Naive thymus-derived CD4-positive, alpha-beta T cell (primary cell): ENCODE measurements at regions of chr1 and their contacts with region 1.

Region 1: DNA sequence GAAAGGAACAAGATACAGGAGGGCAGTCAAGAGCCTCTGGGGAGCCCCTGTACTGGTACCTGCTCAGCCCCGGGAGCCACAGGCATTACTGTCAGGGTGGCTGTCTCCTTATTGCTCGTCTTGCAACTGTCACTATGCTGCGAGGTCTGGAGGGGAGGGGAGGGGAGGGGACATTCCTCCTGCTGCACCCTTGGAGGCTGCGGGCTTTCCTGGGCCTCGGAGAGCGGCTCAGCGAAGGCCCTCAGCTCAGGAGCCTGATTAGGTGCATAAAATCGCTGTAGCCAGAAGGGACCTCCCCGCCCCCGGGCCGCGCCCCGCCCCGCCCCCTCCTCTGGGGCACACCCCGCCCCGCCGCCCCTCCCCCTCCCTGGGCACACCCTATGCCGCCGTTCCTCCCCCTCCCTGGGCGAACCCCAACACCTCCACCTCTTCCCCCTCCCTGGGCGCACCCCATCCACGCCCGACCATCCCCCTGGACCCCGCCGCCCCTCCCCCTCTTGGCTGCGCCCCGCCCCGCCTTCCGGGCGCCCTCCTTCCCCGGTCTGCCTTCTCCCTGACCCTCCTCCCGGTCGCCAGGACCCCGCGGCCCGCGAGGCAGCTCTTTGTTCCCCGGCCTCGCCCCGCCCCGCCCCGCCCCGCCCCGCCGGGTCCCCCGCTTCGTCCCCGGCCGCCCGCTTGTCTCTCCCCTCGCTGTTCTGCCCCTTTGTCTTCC is 35.5 kb downstream of the CACHD1 start:
- DNase-seq: peak; percentile 18 to 65 (median 44)
- ATAC-seq: peak; percentile 83
- H3K4me3 ChIP-seq: peak overlapping the region; percentile 43
- H3K4me3 Mint-ChIP-seq: peak overlapping the region; percentile 69 to 93 (median 90)
- H3K27ac ChIP-seq: peak overlapping the region; percentile 62
- H3K27ac Mint-ChIP-seq: peak overlapping the region in 8 of 9 donors; percentile 57 to 92 (median 85)
- H3K4me1 ChIP-seq: peaks cover 0 to 7% of the 10 kb centered on the region in 2 donors
- H3K4me1 Mint-ChIP-seq: peaks cover 4 to 88% (median 42%) of the 10 kb centered on the region in 7 donors
- H3K27me3 ChIP-seq: no peaks in the 10 kb centered on the region
- H3K27me3 Mint-ChIP-seq: peaks cover 0 to 32% (median 3%) of the 10 kb centered on the region in 5 donors

Region 2: DNA sequence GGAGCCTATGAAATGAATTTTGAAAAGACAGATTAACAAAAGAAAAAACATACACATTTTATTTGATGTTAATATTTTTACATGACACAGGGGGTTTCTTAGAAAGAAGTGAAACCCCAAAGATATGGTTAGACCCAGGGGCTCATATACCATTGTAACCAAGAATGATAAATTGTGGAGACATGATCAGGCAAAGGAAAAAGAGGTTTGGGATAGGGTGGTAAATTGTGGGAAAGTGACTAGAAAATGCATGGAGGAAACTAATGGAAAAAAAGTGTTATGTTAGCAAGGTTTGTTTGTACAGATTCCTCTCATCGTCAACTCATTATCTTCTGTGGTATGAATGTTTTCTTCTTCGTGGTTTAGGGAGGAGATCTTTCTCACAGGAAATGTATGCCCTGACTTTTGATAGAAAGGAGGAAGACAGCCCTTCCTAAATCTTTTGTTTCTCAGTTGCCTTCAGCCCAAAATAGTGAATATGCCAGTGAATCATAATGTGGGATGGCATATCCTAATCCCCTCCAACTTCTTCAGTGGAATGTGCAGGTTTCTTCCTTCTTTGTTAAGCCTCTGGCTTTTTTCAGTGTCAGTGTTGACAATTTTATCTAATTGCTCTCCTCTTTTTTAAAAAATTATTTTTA is 442.3 kb before region 1 on chr1:
- CTCF ChIA-PET with region 1: no interaction called
- POLR2A ChIA-PET with region 1: no interaction called
- intact Hi-C with region 1: no loop called
- DNase-seq: no peak
- ATAC-seq: no peak
- H3K4me3 ChIP-seq: no peak overlapping the region
- H3K4me3 Mint-ChIP-seq: peak overlapping the region in 5 of 10 donors; percentile 2 to 70 (median 41)
- H3K27ac ChIP-seq: no peak overlapping the region
- H3K27ac Mint-ChIP-seq: peak overlapping the region in 7 of 9 donors; percentile 7 to 59 (median 20)
- H3K4me1 ChIP-seq: no peaks in the 10 kb centered on the region
- H3K4me1 Mint-ChIP-seq: peaks cover 0 to 45% (median 3%) of the 10 kb centered on the region in 7 donors
- H3K27me3 ChIP-seq: no peaks in the 10 kb centered on the region
- H3K27me3 Mint-ChIP-seq: peaks cover 3 to 18% (median 8%) of the 10 kb centered on the region in 5 donors

Region 3: GRCh38 chr1:64487061-64487460 is 18.3 kb before region 1 on chr1:
- CTCF ChIA-PET with region 1: no interaction called
- POLR2A ChIA-PET with region 1: interaction called, 4 read pairs
- intact Hi-C with region 1: loop called in 1 of 2 experiments (anchors 2 kb)
- DNase-seq: no peak
- ATAC-seq: no peak
- H3K4me3 ChIP-seq: no peak overlapping the region
- H3K4me3 Mint-ChIP-seq: peak overlapping the region in 2 of 10 donors; percentile 10 to 57
- H3K27ac ChIP-seq: no peak overlapping the region
- H3K27ac Mint-ChIP-seq: peak overlapping the region in 1 of 9 donors; percentile 58
- H3K4me1 ChIP-seq: no peaks in the 10 kb centered on the region
- H3K4me1 Mint-ChIP-seq: peaks cover 0 to 59% (median 12%) of the 10 kb centered on the region in 7 donors
- H3K27me3 ChIP-seq: no peaks in the 10 kb centered on the region
- H3K27me3 Mint-ChIP-seq: peaks cover 5 to 19% (median 8%) of the 10 kb centered on the region in 5 donors

Region 4: DNA sequence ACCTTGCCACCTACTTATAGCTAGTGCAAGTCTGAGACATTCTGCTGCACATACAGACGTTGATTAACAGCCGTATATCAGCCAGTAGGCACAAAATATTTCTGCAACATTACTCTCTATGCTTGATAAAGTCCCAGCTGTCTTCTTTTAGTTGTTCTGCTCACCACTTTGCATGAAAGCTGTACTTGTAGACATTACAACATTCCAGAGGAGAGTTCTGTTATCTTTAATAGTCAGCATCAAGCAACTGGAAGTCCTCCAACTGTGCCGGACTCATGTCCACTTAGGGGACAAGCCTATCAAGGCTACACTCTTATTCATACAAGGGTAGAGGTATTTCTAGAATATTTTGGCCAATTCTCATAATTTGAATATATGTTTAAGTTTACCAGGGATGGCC is 14.5 kb after region 1 on chr1:
- CTCF ChIA-PET with region 1: no interaction called
- POLR2A ChIA-PET with region 1: interaction called, 5 read pairs
- intact Hi-C with region 1: loop called in 1 of 2 experiments (anchors 2 kb)
- DNase-seq: no peak
- ATAC-seq: no peak
- H3K4me3 ChIP-seq: no peak overlapping the region
- H3K4me3 Mint-ChIP-seq: no peak overlapping the region
- H3K27ac ChIP-seq: no peak overlapping the region
- H3K27ac Mint-ChIP-seq: no peak overlapping the region
- H3K4me1 ChIP-seq: no peaks in the 10 kb centered on the region
- H3K4me1 Mint-ChIP-seq: peaks cover 0 to 44% (median 9%) of the 10 kb centered on the region in 7 donors
- H3K27me3 ChIP-seq: no peaks in the 10 kb centered on the region
- H3K27me3 Mint-ChIP-seq: peaks cover 0 to 12% (median 0%) of the 10 kb centered on the region in 5 donors

Region 5: DNA sequence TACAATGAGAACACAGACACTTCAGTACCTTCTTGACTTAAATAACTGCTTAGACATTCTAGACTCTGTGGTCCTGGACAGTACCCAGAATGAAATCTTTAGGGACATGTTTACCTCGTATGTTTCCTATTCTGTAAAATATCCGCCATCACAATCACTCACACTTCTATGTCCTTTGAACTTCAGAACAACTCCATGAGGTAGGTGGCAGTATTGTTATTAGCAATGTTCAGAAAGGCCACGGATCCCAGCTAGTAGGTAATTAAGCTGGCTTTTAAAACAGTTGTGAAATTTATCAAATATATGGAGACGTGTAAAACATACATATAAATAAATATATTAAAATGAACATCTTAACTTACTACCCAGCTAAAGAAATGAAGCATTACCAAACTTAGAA is 47.9 kb after region 1 on chr1:
- CTCF ChIA-PET with region 1: interaction called, 3 read pairs
- POLR2A ChIA-PET with region 1: interaction called, 3 read pairs
- intact Hi-C with region 1: loop called in 1 of 2 experiments (anchors 1 kb)
- DNase-seq: peak in 2 of 9 donors; percentile 12 to 16
- ATAC-seq: no peak
- H3K4me3 ChIP-seq: no peak overlapping the region
- H3K4me3 Mint-ChIP-seq: peak overlapping the region in 3 of 10 donors; percentile 6 to 18 (median 18)
- H3K27ac ChIP-seq: no peak overlapping the region
- H3K27ac Mint-ChIP-seq: peak overlapping the region in 7 of 9 donors; percentile 4 to 91 (median 70)
- H3K4me1 ChIP-seq: peaks cover 0 to 25% of the 10 kb centered on the region in 2 donors
- H3K4me1 Mint-ChIP-seq: peaks cover 20 to 81% (median 57%) of the 10 kb centered on the region in 7 donors
- H3K27me3 ChIP-seq: no peaks in the 10 kb centered on the region
- H3K27me3 Mint-ChIP-seq: peaks cover 0 to 57% (median 0%) of the 10 kb centered on the region in 5 donors

Region 6: GRCh38 chr1:64940025-64940424 is 434.6 kb after region 1 on chr1:
- CTCF ChIA-PET with region 1: no interaction called
- POLR2A ChIA-PET with region 1: no interaction called
- intact Hi-C with region 1: no loop called
- DNase-seq: no peak
- ATAC-seq: peak; percentile 62
- H3K4me3 ChIP-seq: no peak overlapping the region
- H3K4me3 Mint-ChIP-seq: peak overlapping the region in 8 of 10 donors; percentile 39 to 62 (median 50)
- H3K27ac ChIP-seq: no peak overlapping the region
- H3K27ac Mint-ChIP-seq: peak overlapping the region in 4 of 9 donors; percentile 29 to 72 (median 47)
- H3K4me1 ChIP-seq: peaks cover 32 to 43% of the 10 kb centered on the region in 2 donors
- H3K4me1 Mint-ChIP-seq: peaks cover 34 to 92% (median 85%) of the 10 kb centered on the region in 7 donors
- H3K27me3 ChIP-seq: no peaks in the 10 kb centered on the region
- H3K27me3 Mint-ChIP-seq: no peaks in the 10 kb centered on the region